ENCODE measurements at regions of chr12 and their contacts with region 1.

Region 1: GRCh38 chr12:121673003-121673511 is 3.6 kb upstream of the MORN3 start:
- DNase-seq: peak; percentile 26 to 78 (median 35)
- H3K4me3 ChIP-seq: peak overlapping the region in 2 of 3 donors; percentile 56 to 65
- H3K27ac ChIP-seq: peak overlapping the region in 1 of 2 donors; percentile 77
- H3K4me1 ChIP-seq: peaks cover 0 to 5% (median 0%) of the 10 kb centered on the region in 3 donors
- H3K27me3 ChIP-seq: no peaks in the 10 kb centered on the region
- CTCF ChIP-seq: no peak

Region 2: GRCh38 chr12:121550974-121551634 is 122.0 kb before region 1 on chr12:
- intact Hi-C with region 1: loop called (anchors 10 kb)
- DNase-seq: no peak
- H3K4me3 ChIP-seq: no peak overlapping the region
- H3K27ac ChIP-seq: no peak overlapping the region
- H3K4me1 ChIP-seq: no peaks in the 10 kb centered on the region
- H3K27me3 ChIP-seq: no peaks in the 10 kb centered on the region
- CTCF ChIP-seq: no peak

Region 3: DNA sequence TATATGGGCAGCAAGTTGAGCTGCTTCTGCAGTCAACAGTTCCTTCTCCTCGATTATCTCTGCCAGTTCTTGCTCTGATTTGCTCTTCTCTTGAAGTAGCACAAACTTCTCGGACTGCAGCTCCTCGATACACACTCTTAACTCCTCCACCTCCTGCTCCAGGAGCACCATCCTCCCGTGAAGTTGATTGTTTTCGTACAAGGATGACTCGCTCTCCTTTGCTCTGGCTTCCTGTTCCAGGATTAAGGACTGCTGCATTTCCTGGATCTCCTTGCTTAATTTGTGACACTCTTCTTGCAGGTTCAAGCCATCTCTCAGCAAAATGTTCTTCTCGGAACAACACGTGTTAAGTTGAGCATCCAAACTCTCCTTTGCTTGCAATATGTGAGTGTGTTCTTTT is 649.4 kb after region 1 on chr12:
- intact Hi-C with region 1: no loop called
- DNase-seq: no peak
- H3K4me3 ChIP-seq: no peak overlapping the region
- H3K27ac ChIP-seq: no peak overlapping the region
- H3K4me1 ChIP-seq: peaks cover 0 to 4% (median 4%) of the 10 kb centered on the region in 3 donors
- H3K27me3 ChIP-seq: no peaks in the 10 kb centered on the region
- CTCF ChIP-seq: no peak